Naive thymus-derived CD4-positive, alpha-beta T cell (primary cell): ENCODE measurements at regions of chr15 and their contacts with region 1.

Region 1: DNA sequence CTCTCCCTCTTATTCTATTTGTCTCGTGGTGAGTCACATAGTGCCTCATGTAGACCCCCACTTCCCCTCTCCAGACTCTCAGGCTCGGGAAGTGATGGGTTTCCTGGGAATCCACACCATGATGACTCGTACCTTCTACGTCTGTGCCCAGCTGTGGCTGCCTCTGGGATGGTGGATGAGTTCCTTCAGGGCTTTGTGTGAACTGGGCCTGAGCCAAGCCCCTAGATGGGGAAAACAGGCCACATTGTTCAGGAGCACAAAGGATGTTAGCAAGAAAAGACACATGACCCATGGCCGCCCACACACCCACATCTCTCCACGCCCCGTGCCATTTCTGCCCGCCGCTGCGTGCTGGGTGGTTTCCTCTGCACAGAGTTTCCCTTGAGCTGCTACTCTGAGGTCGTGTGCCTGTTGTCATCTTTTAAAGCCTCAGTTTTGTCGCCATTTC is 10.5 kb downstream of the ISG20 start:
- DNase-seq: peak in 8 of 9 donors; percentile 44 to 70 (median 60)
- ATAC-seq: peak; percentile 85
- H3K4me3 ChIP-seq: peak overlapping the region; percentile 23
- H3K4me3 Mint-ChIP-seq: peak overlapping the region; percentile 73 to 94 (median 83)
- H3K27ac ChIP-seq: peak overlapping the region; percentile 76
- H3K27ac Mint-ChIP-seq: peak overlapping the region; percentile 92 to 99 (median 97)
- H3K4me1 ChIP-seq: peaks cover 34 to 80% of the 10 kb centered on the region in 2 donors
- H3K4me1 Mint-ChIP-seq: peaks cover 54 to 96% (median 88%) of the 10 kb centered on the region in 7 donors
- H3K27me3 ChIP-seq: no peaks in the 10 kb centered on the region
- H3K27me3 Mint-ChIP-seq: no peaks in the 10 kb centered on the region

Region 2: DNA sequence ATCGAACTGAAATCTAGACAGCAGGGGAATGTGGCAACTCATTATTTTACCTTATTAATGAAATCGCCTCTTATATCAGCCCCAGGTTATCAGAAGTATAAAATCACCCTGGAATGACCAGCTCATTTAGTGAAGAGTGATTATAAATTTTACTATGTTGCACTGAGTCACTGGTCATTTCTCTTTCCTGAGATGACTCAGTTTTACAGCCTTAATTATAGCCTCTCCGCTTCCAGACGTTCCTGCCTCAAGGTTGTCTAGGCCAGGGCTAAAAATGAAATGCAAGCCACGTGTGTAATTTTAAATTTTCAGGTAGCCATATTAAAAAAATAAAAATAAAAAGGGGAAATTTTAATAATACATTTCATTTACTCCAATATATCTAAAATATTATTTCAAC is 136.1 kb before region 1 on chr15:
- CTCF ChIA-PET with region 1: no interaction called
- POLR2A ChIA-PET with region 1: no interaction called
- intact Hi-C with region 1: no loop called
- DNase-seq: no peak
- ATAC-seq: no peak
- H3K4me3 ChIP-seq: no peak overlapping the region
- H3K4me3 Mint-ChIP-seq: no peak overlapping the region
- H3K27ac ChIP-seq: no peak overlapping the region
- H3K27ac Mint-ChIP-seq: no peak overlapping the region
- H3K4me1 ChIP-seq: no peaks in the 10 kb centered on the region
- H3K4me1 Mint-ChIP-seq: no peaks in the 10 kb centered on the region
- H3K27me3 ChIP-seq: no peaks in the 10 kb centered on the region
- H3K27me3 Mint-ChIP-seq: no peaks in the 10 kb centered on the region

Region 3: GRCh38 chr15:88627463-88627862 is 21.8 kb before region 1 on chr15:
- CTCF ChIA-PET with region 1: interaction called, 8 read pairs
- POLR2A ChIA-PET with region 1: interaction called, 19 read pairs
- intact Hi-C with region 1: no loop called
- DNase-seq: peak in 7 of 9 donors; percentile 85 to 97 (median 95)
- ATAC-seq: peak; percentile 86
- H3K4me3 ChIP-seq: peak overlapping the region; percentile 40
- H3K4me3 Mint-ChIP-seq: peak overlapping the region; percentile 34 to 90 (median 68)
- H3K27ac ChIP-seq: peak overlapping the region; percentile 90
- H3K27ac Mint-ChIP-seq: peak overlapping the region; percentile 83 to 100 (median 98)
- H3K4me1 ChIP-seq: peaks cover 76 to 89% of the 10 kb centered on the region in 2 donors
- H3K4me1 Mint-ChIP-seq: peaks cover 57 to 100% (median 92%) of the 10 kb centered on the region in 7 donors
- H3K27me3 ChIP-seq: no peaks in the 10 kb centered on the region
- H3K27me3 Mint-ChIP-seq: no peaks in the 10 kb centered on the region

Region 4: GRCh38 chr15:90419738-90420406 is 1770.6 kb after region 1 on chr15:
- CTCF ChIA-PET with region 1: no interaction called
- POLR2A ChIA-PET with region 1: no interaction called
- intact Hi-C with region 1: no loop called
- DNase-seq: no peak
- ATAC-seq: no peak
- H3K4me3 ChIP-seq: no peak overlapping the region
- H3K4me3 Mint-ChIP-seq: peak overlapping the region in 6 of 10 donors; percentile 1 to 70 (median 28)
- H3K27ac ChIP-seq: no peak overlapping the region
- H3K27ac Mint-ChIP-seq: peak overlapping the region in 7 of 9 donors; percentile 1 to 81 (median 21)
- H3K4me1 ChIP-seq: peaks cover 18 to 22% of the 10 kb centered on the region in 2 donors
- H3K4me1 Mint-ChIP-seq: peaks cover 40 to 83% (median 67%) of the 10 kb centered on the region in 7 donors
- H3K27me3 ChIP-seq: no peaks in the 10 kb centered on the region
- H3K27me3 Mint-ChIP-seq: no peaks in the 10 kb centered on the region